Activated CD8-positive, alpha-beta T cell treated with anti-CD3 and anti-CD28 coated beads for 36 hours (primary cell): ENCODE measurements at regions of chr5 and their contacts with region 1.

Region 1: DNA sequence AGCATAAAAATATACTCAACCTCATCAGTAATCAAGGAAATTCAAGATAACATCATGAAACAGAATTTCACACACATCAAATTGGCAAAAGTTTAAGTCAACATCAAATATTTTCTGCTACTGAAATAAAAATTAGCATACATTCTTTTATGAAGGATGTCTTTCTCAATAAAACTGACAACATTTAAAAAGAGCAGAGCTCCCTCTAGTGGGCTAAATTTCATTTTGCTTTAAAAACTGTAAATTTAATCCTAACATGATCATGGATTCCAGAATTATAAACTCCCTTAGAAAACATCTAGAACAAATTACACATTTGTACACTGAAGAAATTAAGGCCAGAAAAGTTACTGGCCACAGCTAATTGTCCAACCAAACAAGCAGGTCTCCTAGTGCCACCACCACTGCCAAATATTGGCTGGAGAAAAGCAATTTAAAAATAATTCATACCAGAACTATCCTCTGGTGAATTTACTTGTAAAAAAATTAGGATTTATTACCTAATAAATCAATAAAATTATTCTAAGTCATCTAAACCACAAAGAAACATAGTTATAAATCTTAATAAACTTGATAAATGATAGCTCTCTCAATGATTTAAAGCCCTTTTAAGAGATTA is 31.2 kb downstream of the DEPDC1B start:
- DNase-seq: no peak
- ATAC-seq: no peak
- H3K4me3 Mint-ChIP-seq: no peak overlapping the region
- H3K27ac Mint-ChIP-seq: no peak overlapping the region
- H3K4me1 Mint-ChIP-seq: no peaks in the 10 kb centered on the region
- H3K27me3 Mint-ChIP-seq: no peaks in the 10 kb centered on the region
- CTCF ChIP-seq: peak; percentile 79

Region 2: GRCh38 chr5:59810041-59810440 is 858.8 kb before region 1 on chr5:
- CTCF ChIA-PET with region 1: interaction called, 22 read pairs
- POLR2A ChIA-PET with region 1: no interaction called
- intact Hi-C with region 1: loop called (anchors 5 kb)
- DNase-seq: peak; percentile 73
- ATAC-seq: peak; percentile 49
- H3K4me3 Mint-ChIP-seq: no peak overlapping the region
- H3K27ac Mint-ChIP-seq: no peak overlapping the region
- H3K4me1 Mint-ChIP-seq: peaks cover 5% of the 10 kb centered on the region
- H3K27me3 Mint-ChIP-seq: peaks cover 10% of the 10 kb centered on the region
- CTCF ChIP-seq: peak; percentile 96

Region 3: DNA sequence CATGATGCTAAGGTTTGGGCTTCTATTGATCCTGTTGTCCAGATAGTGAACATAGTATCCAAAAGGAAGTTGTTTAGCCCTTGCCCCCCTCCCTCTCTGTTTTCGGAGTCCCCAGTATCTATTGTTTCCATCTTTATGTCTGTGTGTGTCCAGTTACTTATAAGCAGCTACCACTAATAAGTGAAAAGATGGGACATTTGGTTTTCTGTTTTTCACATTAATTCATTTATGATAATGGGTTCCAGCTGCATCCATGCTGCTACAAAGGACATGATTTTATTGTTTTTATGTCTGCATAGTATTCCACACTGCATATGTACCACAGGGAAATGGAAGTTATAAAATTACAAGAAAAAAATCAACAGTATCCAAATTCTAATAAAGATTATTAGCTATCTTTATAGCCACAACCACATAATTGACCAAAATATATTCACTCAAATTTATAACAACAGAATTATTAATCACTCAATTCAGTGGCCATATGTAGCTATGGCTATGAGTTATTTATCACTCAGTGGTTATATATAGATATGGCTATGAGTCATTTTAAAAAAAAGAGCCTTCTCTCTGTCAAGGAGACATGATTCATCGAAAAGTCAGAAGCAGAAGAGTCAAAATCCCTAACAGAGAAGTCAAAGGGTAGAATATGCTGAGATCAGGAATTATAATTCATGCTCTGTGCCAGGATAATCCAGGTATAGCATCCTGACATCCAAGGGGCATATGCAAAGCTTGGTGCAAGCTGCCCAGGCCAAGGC is 336.4 kb before region 1 on chr5:
- CTCF ChIA-PET with region 1: no interaction called
- POLR2A ChIA-PET with region 1: no interaction called
- intact Hi-C with region 1: no loop called
- DNase-seq: no peak
- ATAC-seq: no peak
- H3K4me3 Mint-ChIP-seq: no peak overlapping the region
- H3K27ac Mint-ChIP-seq: no peak overlapping the region
- H3K4me1 Mint-ChIP-seq: no peaks in the 10 kb centered on the region
- H3K27me3 Mint-ChIP-seq: peaks cover 3% of the 10 kb centered on the region
- CTCF ChIP-seq: no peak

Region 4: DNA sequence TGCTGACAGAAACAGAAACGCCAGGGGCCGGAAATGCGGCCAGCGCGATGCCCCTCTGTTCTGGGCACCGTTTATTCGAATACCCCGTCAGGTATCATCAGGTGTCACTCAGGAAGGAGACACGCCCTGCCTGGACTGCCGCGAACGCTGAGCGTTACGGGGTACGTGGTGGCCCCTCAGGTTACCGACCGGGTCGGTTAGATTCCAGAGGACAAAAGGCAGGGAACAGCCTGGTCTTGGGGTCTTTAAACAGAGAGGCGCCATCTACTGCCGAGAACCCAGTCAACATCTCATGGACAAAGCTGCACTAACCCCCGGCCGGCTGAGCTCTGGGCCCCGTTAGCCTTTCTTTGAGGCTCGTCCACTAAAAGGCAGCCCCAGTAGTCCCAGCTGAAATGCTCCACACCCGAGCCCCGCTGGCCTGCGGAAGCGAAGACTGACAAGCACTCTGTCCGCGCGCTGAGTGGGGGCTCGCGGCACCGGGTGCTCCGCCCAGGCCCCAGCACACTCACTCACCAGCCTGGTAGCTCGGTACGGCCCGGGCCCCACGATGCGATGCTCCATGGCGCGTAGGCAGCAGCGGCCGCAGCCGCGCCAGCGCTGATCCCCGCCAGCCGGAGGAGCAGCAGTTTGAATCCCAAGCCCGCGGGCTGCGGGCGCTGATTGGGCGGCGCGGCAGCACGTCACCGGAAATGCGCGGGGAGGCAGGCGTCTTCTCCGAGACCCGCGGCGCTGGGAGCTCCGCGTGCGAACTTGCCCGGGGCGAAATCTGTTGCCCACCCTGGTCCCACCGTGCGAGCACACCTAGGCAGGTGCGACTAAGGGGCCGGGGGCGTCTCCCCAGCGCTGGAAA is 31.0 kb after region 1 on chr5 and contains the start of gene DEPDC1B:
- CTCF ChIA-PET with region 1: interaction called, 11 read pairs
- POLR2A ChIA-PET with region 1: interaction called, 6 read pairs
- intact Hi-C with region 1: no loop called
- DNase-seq: peak; percentile 90
- ATAC-seq: peak; percentile 95
- H3K4me3 Mint-ChIP-seq: peak within 1 kb of the TSS; percentile 79
- H3K27ac Mint-ChIP-seq: peak within 1 kb of the TSS; percentile 84
- H3K4me1 Mint-ChIP-seq: peaks cover 18% of the 10 kb centered on the region
- H3K27me3 Mint-ChIP-seq: peaks cover 4% of the 10 kb centered on the region
- CTCF ChIP-seq: no peak
- total RNA-seq, gene DEPDC1B: 30.2 to 34.1 TPM